ENCODE measurements at regions of chr20 and their contacts with region 1.

Region 1: DNA sequence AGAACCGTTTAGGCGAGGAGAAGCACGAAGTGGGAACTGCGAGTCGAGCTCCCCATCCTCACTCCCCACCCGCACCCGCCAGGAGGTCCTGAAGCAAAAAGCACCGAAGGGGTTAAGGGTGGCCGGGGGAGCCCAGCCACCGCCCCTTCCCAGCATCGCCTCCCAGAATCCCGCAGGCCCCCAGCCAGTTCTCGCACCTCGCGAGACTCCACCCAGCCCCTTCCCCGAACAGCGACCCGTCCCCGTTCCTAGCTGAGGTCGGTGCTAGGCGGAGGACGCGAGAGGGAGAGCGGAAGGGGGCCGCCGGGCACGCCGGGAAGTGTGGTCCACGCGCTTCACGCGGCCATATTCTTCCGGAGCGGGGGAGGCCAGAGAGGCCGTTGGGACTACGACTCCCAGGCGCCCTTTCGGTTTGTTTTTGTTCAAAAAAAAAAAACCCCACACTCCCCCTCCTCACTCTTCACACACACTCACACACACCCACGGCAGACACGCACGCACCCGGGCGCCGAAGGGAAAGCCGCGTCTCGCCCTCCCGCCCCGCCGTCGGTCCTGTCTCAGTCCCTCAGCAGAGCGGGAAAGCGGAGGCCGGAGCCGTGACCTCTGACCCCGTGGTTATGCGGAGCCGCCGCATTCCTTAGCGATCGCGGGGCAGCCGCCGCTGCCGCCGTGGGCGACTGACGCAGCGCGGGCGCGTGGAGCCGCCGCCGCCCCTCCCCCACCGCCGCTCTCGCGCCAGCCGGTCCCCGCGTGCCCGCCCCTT is at the start of gene ASXL1:
- DNase-seq: peak; percentile 98
- H3K4me3 Mint-ChIP-seq: peak within 1 kb of the TSS; percentile 95
- H3K27ac Mint-ChIP-seq: peak within 1 kb of the TSS; percentile 99
- H3K4me1 Mint-ChIP-seq: peaks cover 64% of the 10 kb centered on the region
- H3K27me3 Mint-ChIP-seq: no peaks in the 10 kb centered on the region
- total RNA-seq, gene ASXL1: 141 to 147 TPM

Region 2: GRCh38 chr20:32109392-32110172 is 248.5 kb before region 1 on chr20 and contains the start of gene TM9SF4:
- CTCF ChIA-PET with region 1: no interaction called
- POLR2A ChIA-PET with region 1: no interaction called
- intact Hi-C with region 1: loop called (anchors 2 kb)
- DNase-seq: peak; percentile 92
- H3K4me3 Mint-ChIP-seq: peak within 1 kb of the TSS; percentile 89
- H3K27ac Mint-ChIP-seq: peak within 1 kb of the TSS; percentile 93
- H3K4me1 Mint-ChIP-seq: peaks cover 36% of the 10 kb centered on the region
- H3K27me3 Mint-ChIP-seq: no peaks in the 10 kb centered on the region
- total RNA-seq, gene TM9SF4: 35.8 to 37.3 TPM

Region 3: DNA sequence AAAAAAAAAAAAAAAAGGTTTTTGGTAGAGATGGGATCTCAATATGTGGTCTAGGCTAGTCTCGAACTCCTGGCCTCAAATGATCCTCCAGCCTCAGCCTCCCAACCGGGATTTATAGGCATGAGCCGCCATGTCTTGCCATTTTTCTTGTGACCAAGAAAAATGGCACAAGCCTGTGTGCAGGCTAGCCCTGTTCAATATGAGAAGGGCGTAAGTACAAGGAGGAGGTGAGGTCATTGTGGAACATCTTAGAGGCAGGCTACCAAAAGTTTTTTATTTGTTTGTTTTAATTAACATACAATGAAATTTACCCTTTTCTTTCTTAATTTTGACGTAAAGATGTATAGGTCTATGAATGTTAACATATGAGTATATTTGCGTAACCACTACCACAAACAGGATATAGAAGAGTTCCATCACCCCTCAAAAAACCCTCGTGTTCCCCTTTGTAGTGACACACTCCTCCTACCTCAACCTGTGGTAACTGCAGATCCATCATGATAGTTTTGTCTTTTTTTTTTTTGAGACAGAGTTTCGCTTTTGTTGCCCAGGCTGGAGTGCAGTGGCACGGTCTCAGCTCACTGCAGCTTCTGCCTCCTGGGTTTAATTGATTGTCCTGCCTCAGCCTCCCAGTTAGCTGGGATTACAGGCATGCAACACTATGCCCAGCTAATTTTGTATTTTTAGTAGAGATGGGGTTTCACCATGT is 108.9 kb before region 1 on chr20:
- CTCF ChIA-PET with region 1: no interaction called
- POLR2A ChIA-PET with region 1: no interaction called
- intact Hi-C with region 1: loop called (anchors 1 kb)
- DNase-seq: peak; percentile 55
- H3K4me3 Mint-ChIP-seq: no peak overlapping the region
- H3K27ac Mint-ChIP-seq: peak overlapping the region; percentile 89
- H3K4me1 Mint-ChIP-seq: peaks cover 55% of the 10 kb centered on the region
- H3K27me3 Mint-ChIP-seq: no peaks in the 10 kb centered on the region

Region 4: GRCh38 chr20:32333988-32334885 is 23.8 kb before region 1 on chr20:
- CTCF ChIA-PET with region 1: interaction called, 5 read pairs
- POLR2A ChIA-PET with region 1: interaction called, 34 read pairs
- intact Hi-C with region 1: loop called (anchors 1 kb)
- DNase-seq: peak; percentile 84
- H3K4me3 Mint-ChIP-seq: peak overlapping the region; percentile 37
- H3K27ac Mint-ChIP-seq: peak overlapping the region; percentile 92
- H3K4me1 Mint-ChIP-seq: peaks cover 57% of the 10 kb centered on the region
- H3K27me3 Mint-ChIP-seq: no peaks in the 10 kb centered on the region

Region 5: GRCh38 chr20:32344835-32345506 is 13.1 kb before region 1 on chr20:
- CTCF ChIA-PET with region 1: no interaction called
- POLR2A ChIA-PET with region 1: no interaction called
- intact Hi-C with region 1: no loop called
- DNase-seq: no peak
- H3K4me3 Mint-ChIP-seq: no peak overlapping the region
- H3K27ac Mint-ChIP-seq: no peak overlapping the region
- H3K4me1 Mint-ChIP-seq: peaks cover 6% of the 10 kb centered on the region
- H3K27me3 Mint-ChIP-seq: no peaks in the 10 kb centered on the region

Region 6: DNA sequence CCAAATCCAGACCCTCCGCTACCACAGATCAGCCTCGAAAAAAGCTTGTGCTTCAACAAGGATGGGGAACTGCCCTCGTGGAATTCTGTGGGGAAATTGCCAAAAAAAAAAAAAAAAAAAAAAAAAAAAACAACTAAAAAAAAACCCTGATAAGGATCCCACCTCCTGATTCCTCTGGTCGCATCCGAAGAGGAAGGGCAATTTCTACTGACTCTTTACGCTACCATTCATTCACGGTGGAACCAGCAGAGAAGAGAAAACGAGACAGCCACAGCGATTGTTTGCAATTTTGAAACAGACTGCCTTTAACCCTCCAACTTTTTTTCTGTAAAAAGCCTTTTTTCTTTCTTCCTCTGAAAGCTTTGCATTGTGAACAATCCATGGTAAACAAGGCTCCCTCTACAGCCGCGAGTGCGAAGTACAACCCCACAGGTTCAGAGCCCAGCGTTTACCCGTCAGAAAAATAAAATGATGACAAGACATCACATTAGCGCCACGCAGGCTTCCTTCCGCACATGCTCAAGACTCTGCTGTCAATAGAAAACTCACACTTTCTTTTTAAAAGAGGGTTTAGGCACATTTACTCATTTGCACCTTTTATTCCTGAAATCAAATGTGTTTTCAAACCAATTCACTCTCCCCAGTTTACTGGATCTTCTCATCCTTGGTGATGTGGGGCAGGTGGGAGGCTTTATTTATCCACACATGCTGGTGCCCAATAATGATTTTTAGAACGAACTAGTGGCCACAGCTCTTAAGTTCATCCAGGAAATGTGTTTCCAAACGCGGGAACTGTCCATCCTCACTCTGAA is 127.1 kb after region 1 on chr20:
- CTCF ChIA-PET with region 1: no interaction called
- POLR2A ChIA-PET with region 1: interaction called, 3 read pairs
- intact Hi-C with region 1: loop called (anchors 5 kb)
- DNase-seq: peak; percentile 91
- H3K4me3 Mint-ChIP-seq: peak overlapping the region; percentile 86
- H3K27ac Mint-ChIP-seq: peak overlapping the region; percentile 93
- H3K4me1 Mint-ChIP-seq: peaks cover 26% of the 10 kb centered on the region
- H3K27me3 Mint-ChIP-seq: no peaks in the 10 kb centered on the region

Region 7: DNA sequence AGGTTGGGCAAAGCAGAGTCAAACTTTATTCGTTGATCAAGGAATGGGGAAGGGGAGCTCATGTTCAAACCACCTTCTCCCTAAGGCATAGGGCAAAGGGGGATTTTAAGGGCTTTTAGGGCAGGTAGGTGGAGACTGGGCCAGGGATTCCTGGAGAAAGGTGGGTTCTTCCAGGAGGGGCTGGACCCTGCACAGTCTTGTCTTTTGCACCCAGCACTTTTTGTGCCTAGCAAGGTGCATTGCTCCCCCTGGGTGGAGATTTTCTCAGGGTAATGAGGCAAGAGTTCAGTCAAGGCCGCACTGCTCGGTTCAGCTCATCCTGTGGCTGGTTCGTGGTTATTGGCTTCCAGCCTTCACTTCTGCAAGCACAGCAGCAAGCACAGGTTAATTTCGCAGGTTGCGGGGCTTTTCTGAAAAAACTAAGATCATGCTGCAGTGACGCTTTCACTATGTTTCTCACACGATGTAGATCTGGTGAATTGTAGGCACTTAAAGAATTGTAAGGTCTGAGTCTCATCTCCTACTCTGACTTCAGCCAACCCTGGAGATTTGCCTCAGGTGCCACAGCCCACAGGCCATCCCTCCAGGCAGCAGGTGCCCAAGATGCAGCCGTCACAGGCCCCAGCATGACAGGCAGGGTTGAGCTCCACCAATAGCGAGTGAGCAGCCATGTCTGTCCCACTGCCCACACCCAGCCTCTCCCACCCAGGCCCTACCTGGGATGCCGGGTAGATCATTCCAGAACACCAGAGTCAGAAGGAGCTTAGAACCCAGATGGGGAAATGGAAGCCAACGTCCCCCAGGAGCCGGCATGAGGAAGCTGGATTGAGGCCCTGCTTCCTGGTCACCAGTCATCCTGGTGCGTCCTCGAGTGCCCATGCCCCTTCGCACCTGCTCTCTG is 609.1 kb after region 1 on chr20:
- CTCF ChIA-PET with region 1: no interaction called
- POLR2A ChIA-PET with region 1: no interaction called
- intact Hi-C with region 1: loop called (anchors 5 kb)
- DNase-seq: peak; percentile 84
- H3K4me3 Mint-ChIP-seq: peak overlapping the region; percentile 50
- H3K27ac Mint-ChIP-seq: no peak overlapping the region
- H3K4me1 Mint-ChIP-seq: peaks cover 72% of the 10 kb centered on the region
- H3K27me3 Mint-ChIP-seq: no peaks in the 10 kb centered on the region

Measured in activated CD4-positive, alpha-beta memory T cell treated with anti-CD3 and anti-CD28 coated beads for 36 hours (primary cell).